Left cardiac atrium (tissue), 4 donors: ENCODE measurements at regions of chr1 and their contacts with region 1.

Region 1: GRCh38 chr1:62530516-62531154 is 66.7 kb upstream of the ANGPTL3 start:
- DNase-seq: peak; percentile 28
- ATAC-seq: peak; percentile 63 to 72

Region 2: GRCh38 chr1:61921435-61921834 is 609.2 kb before region 1 on chr1:
- intact Hi-C with region 1: no loop called
- DNase-seq: no peak
- ATAC-seq: no peak

Region 3: GRCh38 chr1:62735491-62736171 is 205.0 kb after region 1 on chr1:
- intact Hi-C with region 1: loop called in 1 of 2 experiments (anchors 5 kb)
- DNase-seq: no peak
- ATAC-seq: peak; percentile 35 to 47